PC-3 (cell line): ENCODE measurements at regions of chr20 and their contacts with region 1.

Region 1: GRCh38 chr20:4483486-4483885 is 238.2 kb upstream of the PRND start:
- DNase-seq: peak; percentile 71
- ATAC-seq: peak; percentile 29; the same call in 1 of the 2 replicates
- H3K4me3 ChIP-seq: no peak overlapping the region
- H3K27ac ChIP-seq: peak overlapping the region; percentile 43
- H3K4me1 ChIP-seq: peaks cover 21% of the 10 kb centered on the region
- H3K27me3 ChIP-seq: no peaks in the 10 kb centered on the region
- CTCF ChIP-seq: no peak

Region 2: DNA sequence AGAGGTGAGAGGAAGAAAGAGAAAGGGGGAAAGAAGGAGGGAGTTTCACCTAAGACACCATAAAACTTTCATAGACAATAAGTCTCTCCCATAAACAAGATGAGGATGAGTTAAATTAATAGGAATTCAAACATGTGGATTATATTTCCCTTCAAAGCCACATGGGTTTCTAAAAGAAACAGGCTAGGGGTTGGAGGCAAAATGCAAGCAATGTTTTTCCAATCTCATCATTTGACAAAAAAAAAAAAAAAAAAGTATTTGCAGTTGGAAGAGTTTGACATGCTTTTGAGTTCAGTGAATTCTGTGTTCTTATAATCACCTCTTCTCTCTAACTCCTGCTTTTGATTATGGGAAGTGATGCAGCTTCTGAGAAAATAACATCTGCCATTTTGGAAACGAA is 48.3 kb before region 1 on chr20:
- CTCF ChIA-PET with region 1: no interaction called
- POLR2A ChIA-PET with region 1: interaction called, 13 read pairs
- intact Hi-C with region 1: no loop called
- DNase-seq: no peak
- ATAC-seq: no peak
- H3K4me3 ChIP-seq: no peak overlapping the region
- H3K27ac ChIP-seq: no peak overlapping the region
- H3K4me1 ChIP-seq: no peaks in the 10 kb centered on the region
- H3K27me3 ChIP-seq: no peaks in the 10 kb centered on the region
- CTCF ChIP-seq: no peak

Region 3: GRCh38 chr20:4507288-4507719 is 23.8 kb after region 1 on chr20:
- CTCF ChIA-PET with region 1: no interaction called
- POLR2A ChIA-PET with region 1: interaction called, 10 read pairs
- intact Hi-C with region 1: no loop called
- DNase-seq: peak; percentile 87
- ATAC-seq: peak; percentile 92
- H3K4me3 ChIP-seq: no peak overlapping the region
- H3K27ac ChIP-seq: peak overlapping the region; percentile 53
- H3K4me1 ChIP-seq: peaks cover 24% of the 10 kb centered on the region
- H3K27me3 ChIP-seq: no peaks in the 10 kb centered on the region
- CTCF ChIP-seq: no peak